Esophagus muscularis mucosa (tissue), 4 donors: ENCODE measurements at regions of chr11 and their contacts with region 1.

Region 1: DNA sequence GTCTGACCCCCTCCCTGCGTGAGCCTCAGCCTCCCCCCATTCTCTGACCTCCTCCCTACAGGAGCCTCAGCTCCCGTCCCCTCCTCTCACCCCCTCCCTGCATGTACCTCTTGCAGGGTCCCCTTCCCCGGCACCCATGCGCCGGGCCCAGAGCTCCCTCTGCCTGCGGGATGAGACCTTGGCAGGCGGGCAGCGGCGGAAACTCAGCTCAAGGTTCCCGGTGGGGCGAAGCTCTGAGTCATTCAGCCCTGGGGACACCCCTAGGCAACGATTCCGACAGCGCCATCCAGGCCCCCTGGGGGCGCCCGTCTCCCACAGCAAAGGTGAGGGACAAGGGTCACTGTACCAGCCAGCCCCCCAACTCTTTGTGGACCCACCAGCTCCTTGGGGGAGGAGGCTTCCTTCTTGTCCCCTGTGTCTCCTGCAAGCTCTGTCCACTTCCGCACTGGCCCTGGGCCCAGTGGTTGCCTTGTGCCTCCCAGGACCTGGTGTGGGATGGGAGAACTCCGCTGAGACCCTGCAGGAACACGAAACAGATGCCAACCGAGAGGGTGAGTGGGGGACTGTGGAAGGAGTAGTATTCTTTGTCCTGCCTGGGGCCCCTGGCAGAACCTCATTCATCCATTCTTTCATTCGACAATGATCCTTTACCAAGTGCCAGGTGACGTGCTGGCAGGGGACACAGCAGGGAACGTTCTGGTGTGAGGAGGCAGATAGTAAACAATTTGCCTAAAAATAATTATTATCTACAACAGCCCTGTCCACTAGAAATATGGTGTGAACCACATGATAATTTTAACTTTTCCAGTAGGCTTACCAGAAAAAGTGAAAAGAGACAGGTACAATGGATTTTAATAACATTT is 3.7 kb upstream of the RPS6KA4 start:
- DNase-seq: no peak
- H3K4me3 ChIP-seq: peak overlapping the region; percentile 26 to 50 (median 41)
- H3K27ac ChIP-seq: peak overlapping the region; percentile 40 to 52 (median 50)
- H3K4me1 ChIP-seq: peaks cover 33 to 47% (median 43%) of the 10 kb centered on the region in 4 donors
- H3K27me3 ChIP-seq: no peaks in the 10 kb centered on the region
- CTCF ChIP-seq: peak; percentile 67 to 82 (median 79)
- EP300 ChIP-seq: no peak
- POLR2A ChIP-seq: no peak

Region 2: GRCh38 chr11:64321503-64321902 is 33.8 kb before region 1 on chr11:
- intact Hi-C with region 1: loop called (anchors 2 kb)
- DNase-seq: no peak
- H3K4me3 ChIP-seq: no peak overlapping the region
- H3K27ac ChIP-seq: no peak overlapping the region
- H3K4me1 ChIP-seq: peaks cover 15 to 25% (median 18%) of the 10 kb centered on the region in 4 donors
- H3K27me3 ChIP-seq: no peaks in the 10 kb centered on the region
- CTCF ChIP-seq: no peak
- EP300 ChIP-seq: no peak
- POLR2A ChIP-seq: no peak